ENCODE measurements at regions of chr1 and their contacts with region 1.

Region 1: GRCh38 chr1:167059045-167059808 is 30.9 kb downstream of the GPA33 start:
- DNase-seq: peak; percentile 66 to 87
- H3K4me3 ChIP-seq: no peak overlapping the region
- H3K4me1 ChIP-seq: peaks cover 2% of the 10 kb centered on the region; the same call in 1 of the 2 replicates
- H3K27me3 ChIP-seq: no peaks in the 10 kb centered on the region

Region 2: DNA sequence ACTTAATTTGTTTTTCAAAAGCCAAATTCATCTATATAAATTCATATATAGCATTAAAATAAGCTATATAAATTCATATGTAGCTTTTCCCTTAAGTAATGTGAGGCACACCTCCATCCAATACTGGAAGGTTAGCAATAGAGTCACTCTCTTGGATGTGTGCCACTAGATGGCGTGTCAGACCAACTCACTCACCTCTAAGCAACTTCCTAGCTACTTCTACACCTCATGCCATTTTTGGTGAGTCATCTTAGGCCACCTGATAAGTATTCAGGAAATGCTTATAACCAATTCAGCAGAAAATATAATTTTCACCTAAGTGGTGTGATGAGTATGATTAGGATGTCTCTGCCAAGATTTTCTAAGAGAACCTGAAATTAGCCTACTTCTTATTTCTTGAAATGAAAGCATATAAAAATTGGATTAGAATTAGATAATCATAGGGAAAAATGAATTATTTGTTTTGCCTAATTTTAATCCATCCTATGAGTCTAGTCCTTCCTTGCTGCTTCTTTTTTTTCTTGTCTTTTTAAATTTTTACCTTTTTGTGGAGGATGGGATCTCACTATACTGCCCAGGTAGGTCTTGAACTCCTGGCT is 148.7 kb before region 1 on chr1:
- in situ Hi-C with region 1: loop called (anchors 5 kb)
- DNase-seq: peak; percentile 74 to 77
- H3K4me3 ChIP-seq: no peak overlapping the region
- H3K4me1 ChIP-seq: no peaks in the 10 kb centered on the region
- H3K27me3 ChIP-seq: peaks cover 16% of the 10 kb centered on the region

Region 3: DNA sequence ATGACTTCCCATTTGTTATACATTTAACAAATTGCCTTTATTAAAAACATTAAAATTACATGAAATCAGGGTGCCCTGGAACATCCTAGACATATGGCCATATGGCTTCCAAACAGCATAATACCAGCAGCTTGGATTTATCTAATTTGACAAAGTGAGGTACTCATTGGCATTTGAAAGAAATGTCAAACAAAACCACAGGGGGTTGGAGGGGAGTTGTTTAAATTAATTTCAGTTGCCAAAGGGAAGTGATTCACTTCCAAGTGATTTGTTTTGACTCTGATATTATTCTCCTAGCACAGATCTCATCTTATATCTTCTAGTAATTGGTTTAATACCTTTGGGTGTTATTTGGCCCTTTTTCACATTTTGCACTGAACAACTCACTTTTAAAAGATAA is 136.9 kb after region 1 on chr1:
- in situ Hi-C with region 1: no loop called
- DNase-seq: no peak
- H3K4me3 ChIP-seq: no peak overlapping the region
- H3K4me1 ChIP-seq: no peaks in the 10 kb centered on the region
- H3K27me3 ChIP-seq: peaks cover 5% of the 10 kb centered on the region; the same call in 1 of the 2 replicates

Measured in HAP-1 (cell line).